H1 (cell line): ENCODE measurements at regions of chr17 and their contacts with region 1.

Region 1: DNA sequence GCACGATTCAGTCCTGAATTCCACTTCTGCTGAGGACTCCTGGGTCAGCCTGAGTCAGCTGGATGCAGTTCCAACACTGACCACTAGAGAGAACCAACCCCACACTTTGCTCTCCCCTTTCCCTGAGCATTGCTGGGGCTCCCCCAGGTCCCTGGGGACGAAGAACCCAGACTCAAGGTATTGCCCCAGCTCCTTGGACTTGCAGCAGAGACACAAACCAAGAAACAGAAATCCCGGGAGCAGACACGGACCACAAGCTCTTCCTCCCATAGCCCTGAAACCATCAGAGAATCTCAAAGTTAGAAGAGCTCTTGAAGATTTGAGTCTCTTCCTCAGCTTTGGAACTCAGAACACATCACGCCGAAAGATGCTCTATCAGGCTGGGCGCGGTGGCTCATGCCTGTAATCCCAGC is 678 bp upstream of the GH1 start:
- DNase-seq: peak in 1 of 2 experiments; percentile 85
- H3K4me3 ChIP-seq: no peak overlapping the region
- H3K27ac ChIP-seq: no peak overlapping the region
- H3K4me1 ChIP-seq: peaks cover 0 to 5% (median under 1%) of the 10 kb centered on the region in 4 experiments; a peak in 3 of 7 replicates
- H3K27me3 ChIP-seq: no peaks in the 10 kb centered on the region
- CTCF ChIP-seq: peak; percentile 88 to 94 (median 89)
- EP300 ChIP-seq: no peak
- POLR2A ChIP-seq: no peak
- RAD21 ChIP-seq: peak; percentile 89 to 94

Region 2: DNA sequence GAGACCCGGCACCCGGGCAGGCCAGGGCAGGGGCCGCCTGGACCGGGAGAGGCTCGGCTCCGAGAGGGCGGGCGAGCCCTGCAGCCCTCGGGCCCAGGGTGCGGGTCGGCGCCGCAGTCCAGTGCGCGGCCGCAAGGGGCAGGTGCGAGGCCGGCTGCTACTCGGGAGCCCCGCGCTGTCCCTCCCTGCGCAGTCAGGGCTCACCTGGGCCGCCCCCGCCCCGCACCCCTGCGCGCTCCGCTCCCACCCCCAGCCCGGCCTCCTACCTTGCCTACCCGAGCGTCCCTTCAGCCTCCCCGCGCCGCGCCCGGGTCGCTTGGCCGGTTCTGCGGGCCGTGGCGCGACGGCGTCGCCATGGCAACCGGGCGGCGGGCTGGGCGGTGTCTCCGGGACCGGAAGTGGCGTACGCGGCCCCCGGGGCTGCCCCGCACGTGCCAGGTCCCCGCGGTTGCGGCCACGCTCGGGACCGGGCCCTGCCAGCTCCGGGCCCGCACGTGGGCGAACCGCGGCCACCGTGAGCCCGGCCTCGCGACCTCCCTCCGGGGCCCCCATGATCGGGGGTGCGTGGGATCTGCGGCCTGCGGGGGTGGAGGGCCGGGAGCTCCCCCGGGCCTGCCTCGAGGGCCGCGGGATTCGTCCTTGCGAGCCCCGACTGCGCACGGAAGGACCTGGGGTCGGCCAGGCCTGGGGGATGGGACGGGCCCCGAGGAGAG is 473.2 kb before region 1 on chr17 and contains the start of gene CYB561:
- CTCF ChIA-PET with region 1: no interaction called
- POLR2A ChIA-PET with region 1: no interaction called
- DNase-seq: peak in 1 of 2 experiments; percentile 92
- H3K4me3 ChIP-seq: peak within 1 kb of the TSS; percentile 49 to 74 (median 55)
- H3K27ac ChIP-seq: no peak within 1 kb of the TSS; the same call in 1 of the 2 replicates
- H3K4me1 ChIP-seq: peaks cover 0 to 20% (median 10%) of the 10 kb centered on the region in 4 experiments; a peak in 6 of 7 replicates
- H3K27me3 ChIP-seq: peaks cover 0 to 10% (median 2%) of the 10 kb centered on the region in 4 experiments; a peak in 2 of 7 replicates
- CTCF ChIP-seq: peak; percentile 56 to 86 (median 68)
- EP300 ChIP-seq: no peak
- POLR2A ChIP-seq: peak in 1 of 2 experiments; percentile 37; a peak in 1 of 3 replicates
- RAD21 ChIP-seq: peak; percentile 20 to 39; a peak in 2 of 4 replicates
- total RNA-seq, gene CYB561: 23.4 and 26.0 TPM in 2 replicates

Region 3: DNA sequence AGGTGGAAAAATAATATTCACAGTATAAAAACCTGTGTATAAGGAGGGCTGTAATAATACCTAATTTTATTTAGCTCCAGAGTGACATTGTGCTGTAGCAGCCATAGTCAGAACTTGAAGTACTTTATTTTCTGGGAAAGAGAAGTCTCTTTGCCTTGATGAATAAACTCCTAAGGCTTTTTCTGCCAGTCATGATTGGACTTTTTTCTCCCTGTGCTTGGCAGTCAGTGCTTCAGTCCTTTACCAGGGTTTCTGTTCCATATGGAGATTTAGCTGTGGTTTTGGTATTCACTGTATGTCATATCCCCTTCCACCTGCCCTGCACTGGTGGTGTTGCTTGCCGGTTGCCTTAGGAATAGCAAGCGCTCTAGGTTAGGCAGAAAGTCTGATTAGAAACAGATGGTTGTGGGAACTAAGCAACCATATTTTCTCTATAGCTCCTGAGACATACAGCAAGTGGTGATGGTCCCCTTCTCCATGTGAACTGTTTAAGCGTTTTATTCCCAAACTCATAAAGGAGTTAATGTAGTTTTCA is 120.7 kb before region 1 on chr17:
- CTCF ChIA-PET with region 1: no interaction called
- POLR2A ChIA-PET with region 1: no interaction called
- DNase-seq: peak in 1 of 2 experiments; percentile 23
- H3K4me3 ChIP-seq: no peak overlapping the region
- H3K27ac ChIP-seq: no peak overlapping the region
- H3K4me1 ChIP-seq: no peaks in the 10 kb centered on the region
- H3K27me3 ChIP-seq: no peaks in the 10 kb centered on the region
- CTCF ChIP-seq: no peak
- EP300 ChIP-seq: no peak
- POLR2A ChIP-seq: no peak
- RAD21 ChIP-seq: no peak

Region 4: GRCh38 chr17:63859257-63859656 is 60.1 kb before region 1 on chr17:
- CTCF ChIA-PET with region 1: interaction called, 17 read pairs
- POLR2A ChIA-PET with region 1: no interaction called
- DNase-seq: no peak
- H3K4me3 ChIP-seq: no peak overlapping the region
- H3K27ac ChIP-seq: no peak overlapping the region
- H3K4me1 ChIP-seq: no peaks in the 10 kb centered on the region
- H3K27me3 ChIP-seq: peaks cover 0 to 2% (median under 1%) of the 10 kb centered on the region in 4 experiments; a peak in 2 of 7 replicates
- CTCF ChIP-seq: no peak
- EP300 ChIP-seq: no peak
- POLR2A ChIP-seq: no peak
- RAD21 ChIP-seq: no peak

Region 5: GRCh38 chr17:63904316-63904715 is 15.0 kb before region 1 on chr17:
- CTCF ChIA-PET with region 1: interaction called, 43 read pairs
- POLR2A ChIA-PET with region 1: no interaction called
- DNase-seq: no peak
- H3K4me3 ChIP-seq: no peak overlapping the region
- H3K27ac ChIP-seq: no peak overlapping the region
- H3K4me1 ChIP-seq: peaks cover 0 to 4% (median under 1%) of the 10 kb centered on the region in 4 experiments; a peak in 2 of 7 replicates
- H3K27me3 ChIP-seq: no peaks in the 10 kb centered on the region
- CTCF ChIP-seq: no peak
- EP300 ChIP-seq: no peak
- POLR2A ChIP-seq: no peak
- RAD21 ChIP-seq: no peak

Region 6: GRCh38 chr17:63946440-63947367 is 27.4 kb after region 1 on chr17:
- CTCF ChIA-PET with region 1: interaction called, 270 read pairs
- POLR2A ChIA-PET with region 1: interaction called, 13 read pairs
- DNase-seq: peak in 1 of 2 experiments; percentile 85
- H3K4me3 ChIP-seq: no peak overlapping the region
- H3K27ac ChIP-seq: no peak overlapping the region
- H3K4me1 ChIP-seq: peaks cover 0 to 8% (median 1%) of the 10 kb centered on the region in 4 experiments; a peak in 3 of 7 replicates
- H3K27me3 ChIP-seq: no peaks in the 10 kb centered on the region
- CTCF ChIP-seq: peak; percentile 75 to 92 (median 81)
- EP300 ChIP-seq: no peak
- POLR2A ChIP-seq: no peak
- RAD21 ChIP-seq: peak; percentile 64 to 71

Region 7: GRCh38 chr17:63966646-63967264 is 47.4 kb after region 1 on chr17:
- CTCF ChIA-PET with region 1: interaction called, 270 read pairs
- POLR2A ChIA-PET with region 1: no interaction called
- DNase-seq: no peak
- H3K4me3 ChIP-seq: no peak overlapping the region
- H3K27ac ChIP-seq: no peak overlapping the region
- H3K4me1 ChIP-seq: peaks cover 0 to 10% (median 4%) of the 10 kb centered on the region in 4 experiments; a peak in 6 of 7 replicates
- H3K27me3 ChIP-seq: no peaks in the 10 kb centered on the region
- CTCF ChIP-seq: no peak
- EP300 ChIP-seq: no peak
- POLR2A ChIP-seq: no peak
- RAD21 ChIP-seq: no peak

Region 8: GRCh38 chr17:63984651-63985386 is 65.5 kb after region 1 on chr17:
- CTCF ChIA-PET with region 1: interaction called, 67 read pairs
- POLR2A ChIA-PET with region 1: no interaction called
- DNase-seq: no peak
- H3K4me3 ChIP-seq: no peak overlapping the region
- H3K27ac ChIP-seq: no peak overlapping the region
- H3K4me1 ChIP-seq: peaks cover 0 to 17% (median 9%) of the 10 kb centered on the region in 4 experiments; a peak in 6 of 7 replicates
- H3K27me3 ChIP-seq: no peaks in the 10 kb centered on the region; a peak in 1 of 7 replicates
- CTCF ChIP-seq: no peak
- EP300 ChIP-seq: no peak
- POLR2A ChIP-seq: no peak
- RAD21 ChIP-seq: no peak

Region 9: DNA sequence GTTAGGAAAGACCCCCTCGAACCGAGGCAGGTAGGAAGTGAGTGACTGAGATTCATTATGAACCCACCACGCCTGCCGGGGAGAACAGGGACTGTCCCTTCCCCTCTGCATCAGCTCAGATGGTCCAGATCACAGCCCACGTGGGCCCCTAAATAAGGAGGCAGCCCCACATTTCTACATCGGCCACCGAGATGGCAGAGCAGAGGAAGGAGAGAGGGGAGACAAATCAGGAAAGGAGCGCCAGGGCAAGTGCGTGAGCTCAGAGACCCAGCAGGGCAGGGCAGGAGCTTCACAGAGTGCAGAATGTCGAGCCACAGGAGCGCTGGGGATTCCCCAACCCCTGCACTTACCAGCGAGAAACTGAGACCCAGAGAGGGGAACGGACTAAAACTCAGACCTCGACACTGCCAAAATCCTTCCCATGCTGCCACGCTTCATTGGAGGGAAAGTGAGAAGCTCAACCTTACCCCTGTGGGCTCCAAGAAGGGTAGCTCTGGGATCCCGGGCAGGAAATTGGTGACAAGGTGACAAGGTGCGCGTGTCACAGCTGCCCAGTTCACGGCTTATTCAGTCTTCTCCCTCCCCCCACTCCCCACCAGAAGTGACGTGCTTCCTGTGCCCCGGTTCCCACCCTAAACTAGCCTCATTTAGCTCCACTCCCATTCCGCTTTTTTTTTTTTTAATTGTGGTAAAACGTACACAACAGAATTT is 100.9 kb after region 1 on chr17 and contains the start of gene ICAM2:
- CTCF ChIA-PET with region 1: interaction called, 59 read pairs
- POLR2A ChIA-PET with region 1: no interaction called
- DNase-seq: no peak
- H3K4me3 ChIP-seq: peak within 1 kb of the TSS in 3 of 4 experiments; percentile 3 to 17 (median 3); a peak in 2 of 8 replicates
- H3K27ac ChIP-seq: no peak within 1 kb of the TSS
- H3K4me1 ChIP-seq: peaks cover 0 to 5% (median 3%) of the 10 kb centered on the region in 4 experiments; a peak in 5 of 7 replicates
- H3K27me3 ChIP-seq: no peaks in the 10 kb centered on the region
- CTCF ChIP-seq: no peak
- EP300 ChIP-seq: no peak
- POLR2A ChIP-seq: no peak
- RAD21 ChIP-seq: no peak
- total RNA-seq, gene ICAM2: 0.45 TPM in 1 of 2 replicates, not detected in the other